ENCODE measurements at regions of chr16 and their contacts with region 1.

Region 1: DNA sequence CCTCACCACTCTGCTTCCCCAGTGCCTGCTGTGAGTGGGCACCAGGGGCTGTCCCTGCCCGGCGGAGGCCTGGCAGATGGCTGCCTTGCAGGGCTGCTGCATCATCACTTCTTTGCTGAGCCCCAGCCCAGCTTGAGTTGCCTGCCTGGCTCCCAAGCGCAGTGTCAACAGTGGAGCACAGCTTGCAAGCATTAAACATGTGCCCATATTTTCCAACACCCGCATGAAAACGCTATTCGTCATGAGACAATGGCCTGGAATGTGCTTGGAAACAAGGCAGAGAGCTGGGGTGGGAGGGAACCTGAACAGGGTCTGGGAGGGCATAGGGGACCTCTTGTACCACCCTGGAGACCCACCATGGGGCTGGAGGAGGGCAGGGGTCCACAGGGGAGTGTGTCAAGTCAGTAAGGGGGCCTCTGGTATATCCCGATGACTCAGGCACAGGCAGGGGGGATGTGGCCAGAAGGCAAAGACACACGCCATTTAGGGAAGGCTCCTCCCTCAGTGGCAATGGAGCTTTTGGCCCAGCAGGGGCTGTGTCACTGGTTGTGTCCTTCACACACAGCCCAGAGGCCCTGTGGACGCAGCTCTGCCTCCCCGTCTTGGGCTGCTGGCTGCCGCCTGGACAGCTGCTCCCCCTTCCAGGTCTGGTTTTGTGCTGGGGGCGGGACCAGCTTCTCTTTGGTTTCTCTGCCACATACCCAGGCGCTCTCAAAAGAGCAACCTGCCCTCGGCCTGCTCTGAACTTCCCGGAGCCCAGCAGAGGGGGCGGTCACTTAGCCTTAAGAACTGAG is 17.4 kb upstream of the MTSS2 start:
- DNase-seq: peak; percentile 79
- ATAC-seq: peak; percentile 91
- H3K4me3 ChIP-seq: peak overlapping the region in 1 of 3 experiments; percentile 21; a peak in 1 of 6 replicates
- H3K27ac ChIP-seq: peak overlapping the region; percentile 31
- H3K4me1 ChIP-seq: peaks cover 52% of the 10 kb centered on the region
- H3K27me3 ChIP-seq: no peaks in the 10 kb centered on the region
- CTCF ChIP-seq: peak; percentile 43
- EP300 ChIP-seq: no peak
- POLR2A ChIP-seq: 0 out of 4 replicates have a peak, but pooled peaks of 1 of the 2 experiments have one; percentile 21
- RAD21 ChIP-seq: peak; percentile 84

Region 2: GRCh38 chr16:70615945-70616344 is 87.3 kb before region 1 on chr16:
- CTCF ChIA-PET with region 1: no interaction called
- POLR2A ChIA-PET with region 1: no interaction called
- in situ Hi-C with region 1: no loop called
- intact Hi-C with region 1: no loop called
- DNase-seq: no peak
- ATAC-seq: no peak
- H3K4me3 ChIP-seq: no peak overlapping the region
- H3K27ac ChIP-seq: no peak overlapping the region
- H3K4me1 ChIP-seq: peaks cover 2% of the 10 kb centered on the region; the same call in 1 of the 2 replicates
- H3K27me3 ChIP-seq: peaks cover 0 to 14% of the 10 kb centered on the region in 2 experiments; a peak in 2 of 5 replicates
- CTCF ChIP-seq: no peak
- EP300 ChIP-seq: no peak
- POLR2A ChIP-seq: no peak
- RAD21 ChIP-seq: no peak

Region 3: DNA sequence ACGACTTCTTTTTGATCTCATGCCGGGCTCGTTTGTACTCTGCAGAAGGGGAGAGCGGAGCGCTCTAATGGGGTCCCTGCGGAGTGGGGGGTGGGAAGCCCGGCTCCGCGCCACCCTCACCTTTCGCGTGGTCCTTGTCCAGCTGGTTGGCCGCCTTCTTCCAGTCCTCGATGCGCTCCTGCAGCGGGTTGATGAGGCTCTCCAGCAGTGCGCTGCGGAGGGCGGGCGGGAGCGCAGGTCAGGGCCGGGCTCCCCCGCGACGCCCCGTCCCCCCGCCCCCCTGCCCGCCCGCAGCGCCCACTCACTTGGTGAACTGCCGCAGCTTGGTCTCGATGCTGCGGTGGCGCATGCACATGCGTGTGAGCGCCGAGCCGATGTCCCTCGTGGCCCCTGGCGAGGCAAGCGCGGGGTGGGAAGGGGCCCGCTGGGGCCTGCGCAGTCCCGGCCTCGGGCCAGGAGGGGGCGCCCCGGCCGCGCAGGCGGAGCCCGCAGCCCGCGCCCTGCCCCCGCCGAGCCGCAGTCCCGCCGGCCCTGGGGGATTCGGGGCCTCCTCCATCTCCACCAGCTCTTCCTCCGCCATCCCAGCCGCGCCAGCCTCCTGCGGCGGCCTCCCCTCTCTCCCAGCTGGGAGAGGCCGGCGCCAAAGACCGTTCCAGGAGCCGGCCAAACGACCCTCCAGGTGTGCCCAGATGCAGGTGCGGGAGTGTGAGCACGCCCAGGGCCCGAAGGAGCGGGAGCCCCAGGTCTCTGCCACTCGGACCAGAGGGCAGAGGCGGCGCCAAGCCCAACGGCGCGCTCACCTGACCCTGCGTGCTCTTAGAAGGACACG is 23.4 kb before region 1 on chr16:
- CTCF ChIA-PET with region 1: no interaction called
- POLR2A ChIA-PET with region 1: interaction called, 43 read pairs
- in situ Hi-C with region 1: no loop called
- intact Hi-C with region 1: loop called (anchors 1 kb)
- DNase-seq: no peak
- ATAC-seq: no peak
- H3K4me3 ChIP-seq: no peak overlapping the region; a peak in 1 of 6 replicates
- H3K27ac ChIP-seq: peak overlapping the region; percentile 91
- H3K4me1 ChIP-seq: peaks cover 39% of the 10 kb centered on the region
- H3K27me3 ChIP-seq: no peaks in the 10 kb centered on the region; a peak in 1 of 5 replicates
- CTCF ChIP-seq: peak; percentile 26; the same call in 1 of the 2 replicates
- EP300 ChIP-seq: no peak
- POLR2A ChIP-seq: no peak
- RAD21 ChIP-seq: peak; percentile 58; the same call in 1 of the 2 replicates

Region 4: DNA sequence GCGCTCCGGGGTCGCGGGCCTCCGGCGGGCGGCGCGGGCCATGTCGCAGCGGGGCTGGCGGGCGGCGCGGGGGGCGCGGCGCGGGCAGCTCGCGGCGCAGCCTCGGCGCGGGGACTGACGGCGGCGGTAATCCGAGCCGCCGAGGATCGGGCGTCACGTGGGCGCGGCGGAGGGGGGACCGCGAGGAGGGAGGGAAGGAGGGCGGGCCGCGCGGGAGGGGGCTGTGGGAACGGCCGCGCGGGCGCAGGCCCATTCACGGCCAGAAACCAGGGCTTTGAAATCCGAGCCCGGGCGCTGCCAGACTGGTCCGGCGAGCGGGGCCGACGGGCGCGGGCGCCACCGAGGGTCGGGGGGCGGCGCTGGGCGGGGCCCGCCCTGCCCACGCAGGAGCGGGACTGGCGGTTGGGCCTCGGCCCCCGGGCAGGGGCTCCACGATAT is 17.3 kb before region 1 on chr16 and contains the start of gene MTSS2:
- CTCF ChIA-PET with region 1: no interaction called
- POLR2A ChIA-PET with region 1: interaction called, 43 read pairs
- in situ Hi-C with region 1: no loop called
- intact Hi-C with region 1: loop called (anchors 1 kb)
- DNase-seq: peak; percentile 80
- ATAC-seq: peak; percentile 16
- H3K4me3 ChIP-seq: peak within 1 kb of the TSS; percentile 86 to 93 (median 91)
- H3K27ac ChIP-seq: peak within 1 kb of the TSS; percentile 91
- H3K4me1 ChIP-seq: peaks cover 80% of the 10 kb centered on the region
- H3K27me3 ChIP-seq: no peaks in the 10 kb centered on the region; a peak in 1 of 5 replicates
- CTCF ChIP-seq: no peak
- EP300 ChIP-seq: peak in 1 of 2 experiments; percentile 54; a peak in 2 of 4 replicates
- POLR2A ChIP-seq: peak in 1 of 2 experiments; percentile 18; a peak in 1 of 4 replicates
- RAD21 ChIP-seq: peak; percentile 67
- total RNA-seq, gene MTSS2: 84.6 and 132 TPM in 2 replicates

Region 5: GRCh38 chr16:70691223-70692129 is 11.8 kb before region 1 on chr16:
- CTCF ChIA-PET with region 1: no interaction called
- POLR2A ChIA-PET with region 1: interaction called, 37 read pairs
- in situ Hi-C with region 1: no loop called
- intact Hi-C with region 1: loop called (anchors 2 kb)
- DNase-seq: peak; percentile 48
- ATAC-seq: no peak
- H3K4me3 ChIP-seq: no peak overlapping the region; a peak in 1 of 6 replicates
- H3K27ac ChIP-seq: peak overlapping the region; percentile 41
- H3K4me1 ChIP-seq: peaks cover 88% of the 10 kb centered on the region
- H3K27me3 ChIP-seq: no peaks in the 10 kb centered on the region
- CTCF ChIP-seq: peak; percentile 39; the same call in 1 of the 2 replicates
- EP300 ChIP-seq: no peak
- POLR2A ChIP-seq: no peak
- RAD21 ChIP-seq: no peak

Region 6: DNA sequence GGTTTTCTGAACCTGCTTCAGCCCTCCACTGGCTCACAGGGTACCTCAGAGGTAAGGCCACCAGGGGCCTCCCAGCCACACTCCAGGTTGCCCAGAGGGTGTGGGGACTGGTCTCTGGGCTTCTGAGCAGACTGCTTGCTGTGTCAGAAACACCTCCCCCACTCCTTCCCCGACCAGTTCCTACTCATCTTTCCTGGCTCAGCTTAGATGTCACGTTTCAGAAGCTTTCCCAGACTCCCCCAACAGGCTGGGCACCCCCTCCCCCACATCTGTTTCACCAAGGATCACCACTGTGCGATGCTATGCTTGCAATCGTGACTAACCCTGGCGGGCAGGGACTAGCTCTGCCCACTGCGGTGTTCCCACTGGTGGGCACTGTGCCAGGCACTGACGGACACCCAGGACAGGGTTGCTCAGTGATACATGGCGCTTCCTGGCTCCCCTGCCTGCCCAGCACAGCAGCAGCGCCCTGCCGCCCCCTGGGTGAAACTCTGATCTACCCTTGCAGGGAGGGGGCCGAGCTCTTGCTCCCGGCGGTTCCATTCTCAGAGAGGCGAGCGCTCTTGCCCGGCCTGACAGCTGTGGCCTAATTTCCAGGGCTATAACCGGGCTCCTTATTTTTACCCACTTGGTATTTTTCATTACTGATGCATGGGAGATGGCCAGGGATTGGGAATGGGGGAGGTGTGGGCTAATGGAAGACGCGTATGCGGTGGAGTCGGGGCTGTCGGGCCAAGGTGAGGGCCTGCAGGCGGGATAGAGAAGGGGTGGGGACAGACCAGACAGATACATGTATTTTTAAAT is 12.0 kb after region 1 on chr16:
- CTCF ChIA-PET with region 1: no interaction called
- POLR2A ChIA-PET with region 1: interaction called, 10 read pairs
- in situ Hi-C with region 1: no loop called
- intact Hi-C with region 1: no loop called
- DNase-seq: no peak
- ATAC-seq: no peak
- H3K4me3 ChIP-seq: no peak overlapping the region
- H3K27ac ChIP-seq: no peak overlapping the region
- H3K4me1 ChIP-seq: peaks cover 64% of the 10 kb centered on the region
- H3K27me3 ChIP-seq: no peaks in the 10 kb centered on the region
- CTCF ChIP-seq: no peak
- EP300 ChIP-seq: no peak
- POLR2A ChIP-seq: no peak
- RAD21 ChIP-seq: no peak

Region 7: GRCh38 chr16:70737377-70738082 is 34.3 kb after region 1 on chr16:
- CTCF ChIA-PET with region 1: interaction called, 27 read pairs
- POLR2A ChIA-PET with region 1: interaction called, 22 read pairs
- in situ Hi-C with region 1: no loop called
- intact Hi-C with region 1: loop called (anchors 1 kb)
- DNase-seq: no peak
- ATAC-seq: no peak
- H3K4me3 ChIP-seq: no peak overlapping the region
- H3K27ac ChIP-seq: peak overlapping the region; percentile 11
- H3K4me1 ChIP-seq: peaks cover 59% of the 10 kb centered on the region
- H3K27me3 ChIP-seq: no peaks in the 10 kb centered on the region
- CTCF ChIP-seq: no peak
- EP300 ChIP-seq: no peak
- POLR2A ChIP-seq: no peak
- RAD21 ChIP-seq: no peak

Region 8: DNA sequence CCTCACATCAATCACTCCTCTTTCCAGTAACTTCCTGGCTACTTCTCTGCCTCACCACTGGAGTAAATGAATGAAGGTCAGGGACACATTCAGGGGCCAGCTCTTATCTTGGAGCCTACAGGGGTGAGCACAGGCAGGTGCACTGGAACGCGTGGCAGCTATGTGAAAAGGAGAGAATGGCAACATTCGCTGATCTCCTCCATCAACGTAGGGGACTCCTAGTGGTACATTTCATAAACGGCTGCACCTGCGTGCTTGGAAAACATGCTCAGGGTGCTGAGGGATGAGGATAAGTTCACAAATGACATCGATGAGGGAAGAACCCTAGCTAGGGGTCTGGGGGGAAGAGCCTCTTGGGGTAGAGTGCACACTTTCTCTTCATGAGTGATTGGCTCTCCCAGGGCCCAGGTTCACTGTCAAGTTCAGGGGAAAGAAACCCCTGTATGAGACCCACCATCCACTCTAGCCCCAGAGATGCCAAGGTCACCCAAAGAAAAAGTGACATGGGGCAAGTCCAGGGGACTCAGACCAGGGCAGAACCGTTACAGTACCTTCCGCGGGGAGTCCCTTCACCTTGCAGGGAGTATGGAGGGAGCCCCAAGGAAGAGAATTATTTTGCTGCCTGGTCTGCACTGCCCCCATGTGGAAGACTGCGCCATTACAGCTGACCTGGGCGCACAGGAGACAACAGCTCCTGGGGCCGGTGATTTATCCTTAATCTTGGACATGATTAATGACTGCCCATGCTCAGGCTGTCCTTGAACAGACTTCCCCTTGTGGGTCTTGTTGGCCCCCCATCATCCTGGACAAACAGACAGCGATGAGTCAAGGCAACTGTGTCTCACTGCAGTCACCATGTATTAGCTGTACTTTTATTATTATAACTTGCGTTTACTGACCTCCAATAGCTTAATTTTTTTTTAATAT is 67.7 kb after region 1 on chr16:
- CTCF ChIA-PET with region 1: interaction called, 16 read pairs
- POLR2A ChIA-PET with region 1: interaction called, 6 read pairs
- in situ Hi-C with region 1: no loop called
- intact Hi-C with region 1: loop called (anchors 1 kb)
- DNase-seq: peak; percentile 55
- ATAC-seq: peak; percentile 87
- H3K4me3 ChIP-seq: no peak overlapping the region
- H3K27ac ChIP-seq: no peak overlapping the region
- H3K4me1 ChIP-seq: peaks cover 12% of the 10 kb centered on the region
- H3K27me3 ChIP-seq: no peaks in the 10 kb centered on the region
- CTCF ChIP-seq: peak; percentile 93
- EP300 ChIP-seq: no peak
- POLR2A ChIP-seq: no peak
- RAD21 ChIP-seq: peak; percentile 95